Caco-2 (cell line): ENCODE measurements at regions of chr22 and their contacts with region 1.

Region 1: DNA sequence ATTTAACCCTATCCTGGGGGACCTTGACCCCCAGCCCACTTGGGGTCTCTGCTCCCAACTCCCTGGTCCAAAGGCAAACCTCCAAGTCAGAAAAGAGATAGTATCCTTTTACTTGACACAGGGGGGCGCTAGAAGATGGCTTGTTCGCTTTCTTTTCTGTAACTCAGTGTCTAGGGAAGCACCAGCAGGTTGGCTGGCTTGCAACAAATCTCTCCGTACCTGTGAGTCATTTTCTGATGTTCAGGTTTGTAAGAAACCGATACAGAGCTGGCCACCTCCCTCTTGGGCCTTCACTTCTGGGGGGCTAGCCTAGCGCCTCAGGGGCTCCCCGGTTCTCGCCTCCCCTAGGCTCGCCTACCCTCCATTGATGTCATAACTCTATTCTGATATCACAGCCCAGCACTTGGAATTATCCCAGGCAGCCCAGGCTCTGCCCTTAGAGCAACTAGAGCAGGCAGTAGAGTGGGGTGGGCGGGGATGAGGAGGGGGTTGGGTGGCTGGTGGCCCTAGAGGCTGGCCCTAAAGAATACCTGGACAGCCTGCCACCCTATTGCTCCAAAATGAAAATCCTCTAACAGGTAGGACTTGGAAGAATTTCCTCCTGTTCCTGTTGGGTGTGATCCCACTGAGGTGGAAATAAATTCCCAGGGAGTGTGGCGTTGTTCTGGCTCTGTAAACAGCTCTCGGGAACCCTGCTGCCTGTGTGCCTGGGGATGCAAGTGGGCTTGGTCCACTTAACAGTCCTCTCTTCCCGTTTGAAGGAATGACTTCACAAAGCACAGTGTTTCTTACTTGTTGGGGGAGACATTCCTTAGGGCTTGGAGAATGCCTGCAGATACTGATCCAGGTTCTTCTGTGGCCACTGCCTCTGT is 69.4 kb downstream of the OSBP2 start:
- DNase-seq: peak; percentile 76 to 78
- H3K4me3 ChIP-seq: no peak overlapping the region
- H3K4me3 Mint-ChIP-seq: no peak overlapping the region
- H3K27ac Mint-ChIP-seq: no peak overlapping the region
- H3K4me1 ChIP-seq: no peaks in the 10 kb centered on the region
- H3K4me1 Mint-ChIP-seq: no peaks in the 10 kb centered on the region
- H3K27me3 ChIP-seq: no peaks in the 10 kb centered on the region
- H3K27me3 Mint-ChIP-seq: no peaks in the 10 kb centered on the region
- CTCF ChIP-seq: peak; percentile 64 to 68

Region 2: GRCh38 chr22:30636226-30637077 is 127.6 kb before region 1 on chr22:
- CTCF ChIA-PET with region 1: no interaction called
- POLR2A ChIA-PET with region 1: no interaction called
- intact Hi-C with region 1: no loop called
- DNase-seq: peak in 1 of 2 experiments; percentile 20
- H3K4me3 ChIP-seq: peak overlapping the region; percentile 54
- H3K4me3 Mint-ChIP-seq: peak overlapping the region; percentile 66
- H3K27ac Mint-ChIP-seq: no peak overlapping the region
- H3K4me1 ChIP-seq: peaks cover 13% of the 10 kb centered on the region
- H3K4me1 Mint-ChIP-seq: no peaks in the 10 kb centered on the region
- H3K27me3 ChIP-seq: no peaks in the 10 kb centered on the region
- H3K27me3 Mint-ChIP-seq: no peaks in the 10 kb centered on the region
- CTCF ChIP-seq: no peak

Region 3: GRCh38 chr22:30802202-30803166 is 38.4 kb after region 1 on chr22:
- CTCF ChIA-PET with region 1: interaction called, 5 read pairs
- POLR2A ChIA-PET with region 1: no interaction called
- intact Hi-C with region 1: loop called (anchors 5 kb)
- DNase-seq: peak; percentile 87 to 96
- H3K4me3 ChIP-seq: peak overlapping the region; percentile 30
- H3K4me3 Mint-ChIP-seq: peak overlapping the region; percentile 25
- H3K27ac Mint-ChIP-seq: no peak overlapping the region
- H3K4me1 ChIP-seq: peaks cover 6% of the 10 kb centered on the region; the same call in 1 of the 2 replicates
- H3K4me1 Mint-ChIP-seq: no peaks in the 10 kb centered on the region
- H3K27me3 ChIP-seq: no peaks in the 10 kb centered on the region
- H3K27me3 Mint-ChIP-seq: peaks cover 29% of the 10 kb centered on the region
- CTCF ChIP-seq: peak in 1 of 2 experiments; percentile 31

Region 4: GRCh38 chr22:30890686-30891442 is 126.8 kb after region 1 on chr22:
- CTCF ChIA-PET with region 1: interaction called, 10 read pairs
- POLR2A ChIA-PET with region 1: no interaction called
- intact Hi-C with region 1: loop called (anchors 1 kb)
- DNase-seq: peak in 1 of 2 experiments; percentile 64
- H3K4me3 ChIP-seq: no peak overlapping the region
- H3K4me3 Mint-ChIP-seq: no peak overlapping the region
- H3K27ac Mint-ChIP-seq: no peak overlapping the region
- H3K4me1 ChIP-seq: no peaks in the 10 kb centered on the region
- H3K4me1 Mint-ChIP-seq: no peaks in the 10 kb centered on the region
- H3K27me3 ChIP-seq: no peaks in the 10 kb centered on the region
- H3K27me3 Mint-ChIP-seq: no peaks in the 10 kb centered on the region
- CTCF ChIP-seq: peak; percentile 69 to 84

Region 5: DNA sequence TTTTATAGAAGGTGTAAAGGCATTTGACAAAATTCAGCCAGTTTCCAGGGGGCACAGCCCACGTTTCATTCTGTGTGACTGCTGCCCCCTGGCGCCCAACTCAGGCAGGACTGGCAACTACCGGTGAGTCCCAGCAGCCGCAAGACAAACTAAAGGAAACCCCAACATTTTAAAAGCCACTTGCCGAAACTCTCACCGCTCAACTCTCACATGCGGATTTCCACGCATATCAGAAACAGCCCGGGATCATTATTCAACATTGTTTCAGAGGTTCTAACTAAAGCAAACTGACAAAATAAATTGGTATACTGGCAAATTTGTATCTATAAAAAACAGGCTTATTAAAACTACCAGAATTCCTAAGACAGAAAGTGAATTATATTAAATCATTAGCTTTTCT is 156.4 kb after region 1 on chr22:
- CTCF ChIA-PET with region 1: interaction called, 15 read pairs
- POLR2A ChIA-PET with region 1: interaction called, 4 read pairs
- intact Hi-C with region 1: loop called (anchors 1 kb)
- DNase-seq: peak; percentile 73 to 84
- H3K4me3 ChIP-seq: peak overlapping the region; percentile 49
- H3K4me3 Mint-ChIP-seq: peak overlapping the region; percentile 60
- H3K27ac Mint-ChIP-seq: no peak overlapping the region
- H3K4me1 ChIP-seq: no peaks in the 10 kb centered on the region
- H3K4me1 Mint-ChIP-seq: peaks cover 5% of the 10 kb centered on the region
- H3K27me3 ChIP-seq: no peaks in the 10 kb centered on the region
- H3K27me3 Mint-ChIP-seq: no peaks in the 10 kb centered on the region
- CTCF ChIP-seq: peak; percentile 91 to 93

Region 6: GRCh38 chr22:31230871-31231621 is 467.0 kb after region 1 on chr22:
- CTCF ChIA-PET with region 1: no interaction called
- POLR2A ChIA-PET with region 1: no interaction called
- intact Hi-C with region 1: loop called (anchors 1 kb)
- DNase-seq: peak; percentile 61 to 69
- H3K4me3 ChIP-seq: no peak overlapping the region
- H3K4me3 Mint-ChIP-seq: no peak overlapping the region
- H3K27ac Mint-ChIP-seq: no peak overlapping the region
- H3K4me1 ChIP-seq: peaks cover 32% of the 10 kb centered on the region
- H3K4me1 Mint-ChIP-seq: peaks cover 22% of the 10 kb centered on the region
- H3K27me3 ChIP-seq: no peaks in the 10 kb centered on the region
- H3K27me3 Mint-ChIP-seq: no peaks in the 10 kb centered on the region
- CTCF ChIP-seq: peak; percentile 75 to 85